ENCODE measurements at regions of chr18 and their contacts with region 1.

Region 1: GRCh38 chr18:8696749-8697211 is 8.6 kb upstream of the MTCL1 start:
- DNase-seq: peak; percentile 84
- ATAC-seq: peak; percentile 99
- H3K4me3 ChIP-seq: no peak overlapping the region
- H3K27ac ChIP-seq: no peak overlapping the region
- H3K4me1 ChIP-seq: no peaks in the 10 kb centered on the region
- H3K27me3 ChIP-seq: no peaks in the 10 kb centered on the region
- CTCF ChIP-seq: peak; percentile 97

Region 2: DNA sequence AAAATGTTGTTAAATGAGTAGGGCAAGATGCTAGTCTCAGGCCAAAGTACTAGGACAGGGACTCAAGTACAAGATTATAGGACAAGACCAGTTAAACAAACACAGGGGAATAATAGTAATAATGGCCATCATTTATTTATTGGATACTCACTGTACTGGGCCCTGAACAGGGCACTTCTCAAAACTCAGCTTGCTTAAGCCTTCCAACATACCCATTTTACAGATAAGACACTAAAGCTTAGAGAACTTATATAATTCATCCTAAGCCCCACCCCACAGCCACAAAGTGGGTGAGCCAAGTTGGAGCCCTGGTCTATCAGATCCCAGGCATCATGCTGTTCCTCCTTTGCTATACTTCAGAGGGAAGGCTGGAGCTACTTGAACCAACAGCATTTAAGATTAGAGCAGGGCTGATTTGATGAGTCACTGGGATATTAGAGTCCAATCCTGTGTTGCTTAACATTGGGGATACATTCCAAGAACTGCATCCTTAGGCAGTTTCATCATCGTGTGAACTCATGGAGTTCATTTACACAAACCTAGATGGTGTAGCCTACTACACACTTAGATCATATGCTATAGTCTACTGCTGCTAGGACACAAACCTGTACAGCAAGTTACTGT is 162.2 kb after region 1 on chr18:
- intact Hi-C with region 1: no loop called
- DNase-seq: no peak
- ATAC-seq: peak; percentile 85
- H3K4me3 ChIP-seq: no peak overlapping the region
- H3K27ac ChIP-seq: no peak overlapping the region
- H3K4me1 ChIP-seq: no peaks in the 10 kb centered on the region
- H3K27me3 ChIP-seq: no peaks in the 10 kb centered on the region
- CTCF ChIP-seq: no peak

Region 3: GRCh38 chr18:8988261-8988871 is 291.6 kb after region 1 on chr18:
- intact Hi-C with region 1: loop called (anchors 10 kb)
- DNase-seq: peak; percentile 72
- ATAC-seq: peak; percentile 90
- H3K4me3 ChIP-seq: no peak overlapping the region
- H3K27ac ChIP-seq: no peak overlapping the region
- H3K4me1 ChIP-seq: no peaks in the 10 kb centered on the region
- H3K27me3 ChIP-seq: no peaks in the 10 kb centered on the region
- CTCF ChIP-seq: peak; percentile 78